ENCODE measurements at regions of chr18 and their contacts with region 1.

Region 1: GRCh38 chr18:50878345-50879301 is at the start of gene ME2:
- DNase-seq: peak; percentile 89
- H3K4me3 Mint-ChIP-seq: peak within 1 kb of the TSS; percentile 98
- H3K27ac Mint-ChIP-seq: peak within 1 kb of the TSS; percentile 99
- H3K4me1 Mint-ChIP-seq: peaks cover 19% of the 10 kb centered on the region
- H3K27me3 Mint-ChIP-seq: peaks cover 6% of the 10 kb centered on the region
- total RNA-seq, gene ME2: 115 and 117 TPM in 2 replicates

Region 2: DNA sequence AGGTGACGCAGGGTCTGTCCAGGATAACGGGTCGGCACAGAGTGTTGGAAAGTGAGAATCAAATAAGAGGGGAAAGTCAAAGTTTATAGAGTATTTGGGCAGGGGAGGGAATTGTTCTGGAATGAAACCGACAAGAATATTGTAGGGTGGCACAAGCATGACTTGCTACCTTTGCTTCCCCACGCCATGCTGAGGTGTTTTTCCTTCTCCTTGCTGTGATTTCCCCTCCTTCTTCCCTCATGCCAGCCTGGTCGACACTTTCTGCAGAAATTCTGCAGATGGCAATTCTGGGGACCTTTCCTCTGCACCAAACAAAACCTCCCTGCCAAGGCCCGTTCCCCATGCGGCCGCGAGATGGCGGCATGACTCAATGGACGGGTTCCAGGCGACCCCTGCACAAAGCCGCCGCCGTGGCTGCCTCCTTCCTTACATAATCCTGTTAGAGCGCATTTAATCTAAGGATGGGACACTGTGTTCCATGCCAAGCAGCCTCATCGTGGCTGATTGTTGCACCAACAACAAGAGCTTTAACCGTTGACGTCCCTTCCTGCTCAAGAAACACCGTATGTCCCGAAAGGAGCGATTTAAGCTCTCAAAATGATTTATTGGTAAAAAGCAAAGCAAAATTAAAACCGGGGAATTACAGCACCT is 58.8 kb before region 1 on chr18 and contains the start of gene MRO:
- intact Hi-C with region 1: loop called (anchors 2 kb)
- DNase-seq: peak; percentile 66
- H3K4me3 Mint-ChIP-seq: no peak within 1 kb of the TSS
- H3K27ac Mint-ChIP-seq: no peak within 1 kb of the TSS
- H3K4me1 Mint-ChIP-seq: no peaks in the 10 kb centered on the region
- H3K27me3 Mint-ChIP-seq: peaks cover 19% of the 10 kb centered on the region
- total RNA-seq, gene MRO: not detected in 2 replicates

Region 3: DNA sequence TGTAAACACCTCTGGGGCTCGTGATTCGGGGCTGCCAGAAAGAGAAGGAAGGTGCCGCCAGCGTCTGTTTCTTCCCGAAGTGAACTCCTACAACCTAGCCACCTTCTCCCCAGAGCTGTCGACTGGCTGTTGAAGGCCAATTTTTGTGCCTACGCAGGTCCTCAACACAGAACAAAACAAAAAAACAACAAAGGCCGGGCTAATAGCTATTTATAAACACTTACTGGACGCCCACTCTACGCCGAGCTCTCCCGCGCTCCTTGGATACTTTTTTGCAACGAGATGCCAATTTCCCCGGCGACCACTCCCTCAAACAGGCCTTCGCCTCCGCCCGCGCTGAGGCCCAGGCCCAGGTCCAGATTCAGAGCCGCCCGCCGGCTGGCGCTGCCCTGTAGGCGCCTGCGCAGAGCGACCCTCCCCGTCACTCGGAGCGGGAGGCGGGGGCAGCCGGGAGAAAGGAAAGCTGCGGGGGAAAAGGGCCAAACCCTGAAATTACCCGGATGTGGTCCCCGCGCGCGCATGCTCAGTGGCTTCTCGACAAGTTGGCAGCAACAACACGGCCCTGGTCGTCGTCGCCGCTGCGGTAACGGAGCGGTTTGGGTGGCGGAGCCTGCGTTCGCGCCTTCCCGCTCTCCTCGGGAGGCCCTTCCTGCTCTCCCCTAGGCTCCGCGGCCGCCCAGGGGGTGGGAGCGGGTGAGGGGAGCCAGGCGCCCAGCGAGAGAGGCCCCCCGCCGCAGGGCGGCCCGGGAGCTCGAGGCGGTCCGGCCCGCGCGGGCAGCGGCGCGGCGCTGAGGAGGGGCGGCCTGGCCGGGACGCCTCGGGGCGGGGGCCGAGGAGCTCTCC is 151.3 kb after region 1 on chr18 and contains the start of gene SMAD4:
- intact Hi-C with region 1: loop called (anchors 1 kb)
- DNase-seq: peak; percentile 97
- H3K4me3 Mint-ChIP-seq: peak within 1 kb of the TSS; percentile 97
- H3K27ac Mint-ChIP-seq: peak within 1 kb of the TSS; percentile 92
- H3K4me1 Mint-ChIP-seq: peaks cover 44% of the 10 kb centered on the region
- H3K27me3 Mint-ChIP-seq: no peaks in the 10 kb centered on the region
- total RNA-seq, gene SMAD4: 73.0 and 77.1 TPM in 2 replicates

Region 4: GRCh38 chr18:51153659-51154371 is 275.2 kb after region 1 on chr18:
- intact Hi-C with region 1: loop called (anchors 5 kb)
- DNase-seq: peak; percentile 30
- H3K4me3 Mint-ChIP-seq: peak overlapping the region; percentile 76
- H3K27ac Mint-ChIP-seq: peak overlapping the region; percentile 96
- H3K4me1 Mint-ChIP-seq: peaks cover 48% of the 10 kb centered on the region
- H3K27me3 Mint-ChIP-seq: no peaks in the 10 kb centered on the region

Measured in activated T-helper 2 cell treated with anti-CD3 and anti-CD28 coated beads, Interferon-gamma antibody, Interleukin-2, Interleukin-4, amounts not matched to agents 10 μg/mL and 5 μg/mL and 100 μg/mL, durations not matched to agents 14 hours and 24 hours and 36 hours (primary cell).